ENCODE measurements at regions of chr13 and their contacts with region 1.

Region 1: DNA sequence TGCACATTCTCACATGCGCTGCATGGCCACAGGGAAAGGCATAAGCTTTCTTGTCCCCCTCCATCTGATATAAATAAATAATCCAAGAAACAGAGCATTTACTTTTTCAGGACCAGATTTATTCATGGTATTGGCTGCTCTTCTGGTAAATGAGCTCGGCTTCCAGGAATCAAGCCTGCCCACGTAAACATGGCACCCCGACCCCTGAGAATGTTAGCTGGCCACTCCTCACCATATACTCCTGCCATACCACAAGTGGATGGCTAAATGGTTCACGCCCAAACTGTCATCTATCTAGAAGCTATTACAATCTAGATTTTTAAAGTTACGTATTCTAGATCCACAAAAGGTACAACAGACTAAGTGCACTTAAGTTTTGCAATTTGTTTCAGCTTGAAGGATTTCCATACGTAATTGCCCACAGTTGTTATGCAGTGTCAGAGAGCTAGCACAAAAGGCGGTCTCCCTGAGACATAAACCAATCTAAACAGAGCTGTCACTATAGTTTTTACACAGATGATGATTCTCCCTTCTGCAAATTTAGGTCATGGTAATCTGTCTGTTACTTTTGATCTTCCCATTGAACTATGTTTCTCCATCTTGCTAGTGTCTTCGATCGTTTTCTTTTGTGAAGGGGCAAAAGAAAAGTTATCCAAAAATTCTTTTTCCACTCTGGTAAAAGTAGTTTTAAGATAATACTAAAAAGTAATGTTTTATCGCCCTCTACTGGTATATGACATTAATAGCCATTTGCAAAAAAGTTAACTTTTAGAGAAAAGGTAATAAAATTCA is 16.2 kb upstream of the FOXO1 start:
- DNase-seq: no peak
- H3K4me3 Mint-ChIP-seq: no peak overlapping the region
- H3K27ac Mint-ChIP-seq: no peak overlapping the region
- H3K4me1 Mint-ChIP-seq: peaks cover 13% of the 10 kb centered on the region
- H3K27me3 Mint-ChIP-seq: peaks cover 4% of the 10 kb centered on the region

Region 2: DNA sequence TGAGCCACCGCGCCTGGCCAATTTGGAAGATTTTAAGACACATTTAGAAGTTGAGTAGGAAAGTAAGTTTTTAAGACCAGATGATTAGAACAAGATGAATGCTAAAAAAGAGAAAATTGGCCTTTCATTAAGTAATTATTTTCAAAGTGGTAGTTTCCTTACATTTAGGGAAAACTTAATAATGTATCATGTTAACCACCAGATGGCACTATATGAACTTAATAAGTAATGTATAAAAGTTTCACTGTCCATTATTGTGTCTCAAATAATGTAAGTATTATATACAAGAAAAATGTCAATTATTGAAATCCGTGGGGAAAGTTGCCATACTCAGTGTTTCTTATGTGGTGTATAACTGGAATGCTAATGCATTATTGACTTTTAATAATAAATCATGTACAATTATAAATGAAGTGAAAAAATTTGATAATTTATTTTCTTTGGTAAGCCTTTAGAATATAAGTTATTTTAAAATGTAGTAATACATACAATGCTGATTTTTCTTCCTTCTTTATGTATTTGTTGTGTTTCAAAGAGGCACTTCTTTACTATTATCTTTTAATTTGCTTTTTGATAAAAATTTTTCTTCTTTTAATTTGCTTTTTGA is 998.0 kb before region 1 on chr13:
- CTCF ChIA-PET with region 1: interaction called, 13 read pairs
- DNase-seq: no peak
- H3K4me3 Mint-ChIP-seq: no peak overlapping the region
- H3K27ac Mint-ChIP-seq: no peak overlapping the region
- H3K4me1 Mint-ChIP-seq: peaks cover 17% of the 10 kb centered on the region
- H3K27me3 Mint-ChIP-seq: no peaks in the 10 kb centered on the region

Region 3: DNA sequence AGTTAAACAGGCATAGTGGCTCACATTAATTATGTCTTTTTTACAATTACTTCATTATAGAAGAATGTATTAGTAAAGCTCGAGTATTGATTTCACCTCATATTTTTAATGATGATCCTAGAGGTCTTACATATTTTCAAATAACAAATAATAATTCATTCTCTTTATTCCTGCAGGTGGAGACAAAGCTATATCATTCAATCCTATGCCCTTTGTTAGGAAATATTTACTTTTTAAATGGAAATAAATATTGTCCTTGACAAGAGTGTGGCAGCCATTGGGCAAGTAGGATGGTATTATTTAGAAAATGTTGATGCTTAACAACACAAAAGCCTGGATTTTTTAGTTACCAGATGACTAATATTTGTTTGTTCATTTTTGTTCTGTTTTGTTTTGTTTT is 899.6 kb before region 1 on chr13:
- CTCF ChIA-PET with region 1: interaction called, 19 read pairs
- DNase-seq: no peak
- H3K4me3 Mint-ChIP-seq: no peak overlapping the region
- H3K27ac Mint-ChIP-seq: no peak overlapping the region
- H3K4me1 Mint-ChIP-seq: peaks cover 7% of the 10 kb centered on the region
- H3K27me3 Mint-ChIP-seq: peaks cover 6% of the 10 kb centered on the region

Region 4: GRCh38 chr13:39942552-39943273 is 739.9 kb before region 1 on chr13:
- CTCF ChIA-PET with region 1: interaction called, 20 read pairs
- DNase-seq: peak; percentile 76
- H3K4me3 Mint-ChIP-seq: no peak overlapping the region
- H3K27ac Mint-ChIP-seq: no peak overlapping the region
- H3K4me1 Mint-ChIP-seq: no peaks in the 10 kb centered on the region
- H3K27me3 Mint-ChIP-seq: peaks cover 15% of the 10 kb centered on the region

Region 5: DNA sequence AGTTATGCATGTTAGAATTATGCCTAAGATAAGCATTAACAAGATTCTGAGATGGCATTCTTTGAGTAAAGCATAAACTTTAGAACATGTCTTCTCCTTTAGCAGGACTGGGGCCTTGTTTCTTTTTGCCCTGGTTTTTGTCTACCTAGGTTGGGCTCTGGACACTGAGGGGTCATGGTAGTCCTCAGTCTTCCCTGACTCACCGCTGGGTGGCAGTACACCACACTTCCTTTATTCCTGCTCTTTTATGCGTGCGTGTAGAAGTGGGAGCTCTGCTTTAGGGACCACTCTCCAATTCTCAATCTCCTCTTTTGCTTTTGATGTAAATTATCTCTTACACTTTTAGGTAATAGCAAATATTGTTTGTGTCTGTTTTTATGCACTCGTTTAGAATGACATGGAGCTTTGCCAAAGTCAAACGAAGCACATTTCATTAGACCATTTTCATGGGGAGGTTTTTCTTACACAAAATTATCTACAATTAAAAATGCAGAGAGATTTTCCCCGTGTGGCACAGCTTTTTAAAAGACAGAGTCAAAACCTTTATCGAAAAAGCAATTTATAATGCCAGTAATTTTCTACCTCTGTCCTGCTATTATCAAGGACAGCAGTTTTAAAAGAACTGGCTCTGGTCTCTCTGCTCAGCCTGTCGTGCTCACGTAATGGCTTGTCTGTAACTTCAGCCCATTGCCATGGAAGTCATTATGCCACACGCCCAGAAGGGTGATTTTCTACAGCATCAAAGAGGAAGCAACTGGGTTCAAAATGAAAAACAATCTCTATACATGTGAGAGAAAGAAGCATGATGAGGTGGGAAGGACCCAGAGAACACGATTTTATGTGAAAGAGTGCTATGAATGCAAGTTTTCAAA is 613.2 kb before region 1 on chr13:
- CTCF ChIA-PET with region 1: interaction called, 25 read pairs
- DNase-seq: peak; percentile 79
- H3K4me3 Mint-ChIP-seq: no peak overlapping the region
- H3K27ac Mint-ChIP-seq: peak overlapping the region; percentile 1
- H3K4me1 Mint-ChIP-seq: peaks cover 23% of the 10 kb centered on the region
- H3K27me3 Mint-ChIP-seq: no peaks in the 10 kb centered on the region

Region 6: DNA sequence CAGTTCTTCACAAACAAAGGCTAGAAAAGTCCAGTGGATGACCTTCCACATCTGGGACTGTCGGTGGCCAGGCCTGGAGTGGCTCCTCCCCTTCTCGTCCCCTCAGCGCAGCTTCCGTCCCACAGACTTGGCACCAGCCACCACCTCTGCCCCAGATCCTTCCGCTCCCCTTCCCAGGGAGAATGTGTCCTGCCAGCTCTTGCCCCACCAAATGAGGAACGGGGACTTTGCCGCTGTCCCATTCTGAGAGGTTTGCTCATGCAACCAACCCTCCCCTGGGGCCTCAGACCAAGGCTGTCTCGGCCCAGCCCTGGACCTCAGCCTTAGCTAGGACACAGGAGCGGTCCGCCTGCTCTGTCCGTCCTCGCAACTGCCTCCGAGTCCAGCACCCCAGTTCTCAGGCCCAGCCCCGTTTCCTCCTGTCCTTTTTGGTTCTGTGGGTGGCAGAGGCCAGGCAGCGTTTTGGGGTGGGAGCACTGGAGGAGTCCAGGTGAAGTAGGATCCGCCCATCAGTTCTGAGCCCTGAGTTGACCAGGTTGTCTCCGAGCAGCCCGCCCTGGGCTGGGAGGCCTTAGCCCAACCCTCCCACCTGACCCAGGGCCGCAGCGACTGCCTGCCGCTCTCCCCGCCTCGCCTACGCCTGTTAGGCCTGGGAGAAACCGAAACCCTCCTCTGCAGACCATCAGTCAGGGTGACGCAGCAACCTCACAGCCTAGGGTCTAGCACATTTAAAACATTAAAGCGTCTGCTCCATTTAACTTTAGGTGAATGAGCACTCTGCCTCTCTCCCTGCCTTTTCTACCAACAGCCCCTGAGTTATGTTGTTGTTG is 300.5 kb before region 1 on chr13:
- CTCF ChIA-PET with region 1: no interaction called
- DNase-seq: no peak
- H3K4me3 Mint-ChIP-seq: no peak overlapping the region
- H3K27ac Mint-ChIP-seq: no peak overlapping the region
- H3K4me1 Mint-ChIP-seq: peaks cover 24% of the 10 kb centered on the region
- H3K27me3 Mint-ChIP-seq: peaks cover 9% of the 10 kb centered on the region

Region 7: GRCh38 chr13:40668335-40668734 is 14.3 kb before region 1 on chr13:
- CTCF ChIA-PET with region 1: interaction called, 16 read pairs
- DNase-seq: peak; percentile 54
- H3K4me3 Mint-ChIP-seq: peak overlapping the region; percentile 76
- H3K27ac Mint-ChIP-seq: peak overlapping the region; percentile 89
- H3K4me1 Mint-ChIP-seq: peaks cover 35% of the 10 kb centered on the region
- H3K27me3 Mint-ChIP-seq: no peaks in the 10 kb centered on the region

Region 8: GRCh38 chr13:40777166-40777808 is 94.6 kb after region 1 on chr13:
- CTCF ChIA-PET with region 1: interaction called, 46 read pairs
- DNase-seq: peak; percentile 55
- H3K4me3 Mint-ChIP-seq: peak overlapping the region; percentile 69
- H3K27ac Mint-ChIP-seq: peak overlapping the region; percentile 98
- H3K4me1 Mint-ChIP-seq: peaks cover 37% of the 10 kb centered on the region
- H3K27me3 Mint-ChIP-seq: no peaks in the 10 kb centered on the region

Measured in activated naive CD4-positive, alpha-beta T cell treated with anti-CD3 and anti-CD28 coated beads, Interleukin-2, amount 10 ng/mL, durations not matched to agents 7 days and 5 days (primary cell).